ENCODE measurements at regions of chr3 and their contacts with region 1.

Region 1: GRCh38 chr3:189530822-189531221 is 100.4 kb upstream of the TP63 start:
- DNase-seq: no peak
- H3K4me3 Mint-ChIP-seq: no peak overlapping the region
- H3K27ac Mint-ChIP-seq: peak overlapping the region; percentile 61
- H3K4me1 Mint-ChIP-seq: peaks cover 24% of the 10 kb centered on the region
- H3K27me3 Mint-ChIP-seq: no peaks in the 10 kb centered on the region

Region 2: DNA sequence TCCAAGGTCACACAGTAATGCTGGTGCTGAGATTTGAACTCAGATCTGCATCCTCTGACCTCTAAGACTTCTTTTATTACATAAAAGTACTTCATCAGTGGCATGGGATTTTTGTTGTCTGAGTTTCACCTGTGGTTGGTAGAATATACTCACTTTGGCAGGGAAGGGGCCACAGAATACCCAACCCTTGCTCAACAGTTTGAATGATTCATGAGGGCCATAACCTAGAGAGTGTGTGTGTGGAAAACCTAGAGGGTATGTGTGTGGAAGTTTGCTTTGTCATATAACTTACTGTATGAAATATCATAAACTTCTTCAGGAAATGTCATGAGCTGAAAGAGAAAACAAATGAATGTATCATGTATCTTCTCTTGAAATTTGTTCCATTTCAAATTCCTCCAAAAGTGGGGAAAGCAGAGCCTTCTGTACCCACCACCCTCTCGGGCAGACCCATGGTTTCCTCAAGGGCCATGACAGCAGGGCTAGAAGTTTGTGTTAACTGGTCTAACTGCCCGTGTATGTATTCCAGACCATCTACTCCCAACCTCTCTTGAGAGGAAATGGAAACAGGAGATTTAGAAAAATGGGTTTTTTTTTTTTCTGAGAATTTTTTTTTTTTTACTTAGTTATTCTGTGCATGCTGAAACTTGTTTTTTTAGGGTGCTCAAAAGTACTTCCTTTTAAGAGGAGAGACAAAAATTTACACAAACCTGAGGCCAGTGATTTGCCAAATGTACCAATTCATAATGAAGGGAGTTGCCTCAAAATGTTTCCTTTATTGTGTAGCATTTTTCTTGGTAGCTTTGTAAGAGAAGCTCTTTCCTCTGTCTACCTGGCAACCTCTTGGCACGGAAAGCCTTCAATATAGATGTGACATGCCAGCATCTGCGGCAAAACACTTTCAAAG is 232.1 kb before region 1 on chr3:
- intact Hi-C with region 1: loop called (anchors 1 kb)
- DNase-seq: no peak
- H3K4me3 Mint-ChIP-seq: peak overlapping the region; percentile 28
- H3K27ac Mint-ChIP-seq: peak overlapping the region; percentile 70
- H3K4me1 Mint-ChIP-seq: peaks cover 44% of the 10 kb centered on the region
- H3K27me3 Mint-ChIP-seq: no peaks in the 10 kb centered on the region

Region 3: GRCh38 chr3:189331002-189331418 is 199.8 kb before region 1 on chr3:
- intact Hi-C with region 1: loop called (anchors 1 kb)
- DNase-seq: no peak
- H3K4me3 Mint-ChIP-seq: peak overlapping the region; percentile 48
- H3K27ac Mint-ChIP-seq: peak overlapping the region; percentile 73
- H3K4me1 Mint-ChIP-seq: peaks cover 58% of the 10 kb centered on the region
- H3K27me3 Mint-ChIP-seq: no peaks in the 10 kb centered on the region

Region 4: GRCh38 chr3:189502676-189503257 is 28.1 kb before region 1 on chr3:
- intact Hi-C with region 1: loop called (anchors 2 kb)
- DNase-seq: no peak
- H3K4me3 Mint-ChIP-seq: no peak overlapping the region
- H3K27ac Mint-ChIP-seq: no peak overlapping the region
- H3K4me1 Mint-ChIP-seq: peaks cover 12% of the 10 kb centered on the region
- H3K27me3 Mint-ChIP-seq: no peaks in the 10 kb centered on the region

Region 5: DNA sequence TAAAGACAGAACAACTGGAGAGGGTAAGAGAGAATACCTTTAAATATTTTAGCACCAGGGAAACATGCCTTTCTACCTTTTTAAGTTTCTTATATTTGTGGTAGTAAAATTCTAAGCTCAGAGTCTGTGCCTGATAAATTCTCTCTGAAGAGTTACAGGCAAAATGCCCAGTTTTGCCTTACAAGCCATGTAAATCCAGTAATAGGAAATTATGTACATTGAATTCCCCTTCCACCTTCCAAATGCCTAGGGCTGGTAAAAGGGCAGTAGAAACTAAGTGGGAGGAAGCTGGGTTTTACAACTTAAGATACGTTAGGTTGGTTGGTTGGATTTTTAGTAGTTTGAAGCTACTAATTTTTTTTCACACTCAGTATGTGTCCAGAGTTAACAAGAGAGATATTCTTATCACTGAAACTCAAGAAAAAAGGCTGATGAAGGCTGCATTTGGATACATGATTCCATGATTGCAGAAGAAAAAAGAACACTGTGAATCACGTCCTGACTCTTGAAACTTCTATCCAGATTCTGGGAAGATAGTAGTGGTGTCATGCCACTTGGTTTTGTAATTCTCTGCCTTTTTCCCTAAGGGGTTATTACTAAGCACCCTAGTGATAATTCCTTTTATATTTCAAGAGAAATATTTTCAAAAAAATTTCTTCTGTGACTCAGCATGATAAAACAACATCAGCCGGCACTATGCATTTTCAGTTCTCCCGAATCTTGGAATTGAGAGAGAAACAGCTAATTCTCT is 57.4 kb after region 1 on chr3:
- intact Hi-C with region 1: loop called (anchors 1 kb)
- DNase-seq: no peak
- H3K4me3 Mint-ChIP-seq: no peak overlapping the region
- H3K27ac Mint-ChIP-seq: no peak overlapping the region
- H3K4me1 Mint-ChIP-seq: peaks cover 14% of the 10 kb centered on the region
- H3K27me3 Mint-ChIP-seq: peaks cover 8% of the 10 kb centered on the region